Activated naive CD4-positive, alpha-beta T cell treated with anti-CD3 and anti-CD28 coated beads for 36 hours (primary cell): ENCODE measurements at regions of chr20 and their contacts with region 1.

Region 1: DNA sequence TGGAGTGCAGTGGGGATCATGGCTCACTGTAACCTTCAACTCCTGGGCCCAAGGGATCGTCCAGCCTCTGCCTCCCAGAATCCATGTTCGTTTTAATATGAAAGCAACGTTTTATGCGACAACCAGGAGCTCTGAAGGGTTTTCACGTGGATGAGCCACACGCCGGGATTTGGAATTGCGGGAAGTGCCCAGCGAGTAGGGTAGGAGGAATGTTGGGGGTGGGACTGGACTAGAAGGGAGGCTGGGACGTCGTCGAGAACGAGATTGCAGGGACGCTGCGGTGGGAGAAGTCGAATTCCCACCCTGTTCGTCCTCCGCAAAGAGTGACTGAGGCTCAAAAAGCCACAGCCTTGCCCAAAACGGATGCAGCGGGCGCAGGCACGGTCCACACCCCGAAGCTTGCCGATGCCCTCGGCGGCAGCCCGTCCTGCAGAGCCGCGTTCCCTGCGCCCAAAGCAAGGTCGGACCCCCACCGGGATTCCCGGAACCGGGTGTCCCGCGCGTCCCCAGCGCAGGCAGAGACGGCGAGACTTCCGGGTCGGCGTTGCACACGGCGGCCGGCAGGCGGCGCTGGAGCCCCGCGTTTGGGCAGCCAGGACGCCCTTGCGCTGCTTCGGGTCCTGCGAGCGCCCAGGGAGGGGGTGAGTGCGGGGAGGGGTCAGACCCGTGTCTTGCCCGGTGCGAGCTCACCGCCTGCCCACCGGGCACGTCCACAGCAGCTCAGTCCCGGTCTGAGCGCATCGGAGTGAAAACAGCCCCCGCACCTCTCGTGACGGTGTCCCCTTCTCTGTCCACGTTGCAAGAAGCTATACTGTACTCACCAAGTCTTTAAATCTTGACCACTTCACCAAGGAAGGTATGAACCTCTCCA is 87.8 kb downstream of the DHX35 start:
- DNase-seq: peak; percentile 78
- H3K4me3 Mint-ChIP-seq: peak overlapping the region; percentile 76
- H3K27ac Mint-ChIP-seq: peak overlapping the region; percentile 18
- H3K4me1 Mint-ChIP-seq: peaks cover 6% of the 10 kb centered on the region
- H3K27me3 Mint-ChIP-seq: no peaks in the 10 kb centered on the region

Region 2: GRCh38 chr20:38645980-38646858 is 403.7 kb before region 1 on chr20:
- CTCF ChIA-PET with region 1: interaction called, 4 read pairs
- intact Hi-C with region 1: loop called (anchors 1 kb)
- DNase-seq: peak; percentile 91
- H3K4me3 Mint-ChIP-seq: peak overlapping the region; percentile 53
- H3K27ac Mint-ChIP-seq: no peak overlapping the region
- H3K4me1 Mint-ChIP-seq: peaks cover 11% of the 10 kb centered on the region
- H3K27me3 Mint-ChIP-seq: peaks cover 26% of the 10 kb centered on the region

Region 3: GRCh38 chr20:38805502-38805957 is 244.4 kb before region 1 on chr20 and contains the start of gene PPP1R16B:
- CTCF ChIA-PET with region 1: no interaction called
- intact Hi-C with region 1: loop called (anchors 5 kb)
- DNase-seq: peak; percentile 76
- H3K4me3 Mint-ChIP-seq: peak within 1 kb of the TSS; percentile 85
- H3K27ac Mint-ChIP-seq: peak within 1 kb of the TSS; percentile 96
- H3K4me1 Mint-ChIP-seq: peaks cover 47% of the 10 kb centered on the region
- H3K27me3 Mint-ChIP-seq: no peaks in the 10 kb centered on the region
- total RNA-seq, gene PPP1R16B: 38.1 to 40.0 TPM

Region 4: GRCh38 chr20:38997622-38998021 is 52.3 kb before region 1 on chr20:
- CTCF ChIA-PET with region 1: interaction called, 22 read pairs
- intact Hi-C with region 1: no loop called
- DNase-seq: peak; percentile 60
- H3K4me3 Mint-ChIP-seq: no peak overlapping the region
- H3K27ac Mint-ChIP-seq: peak overlapping the region; percentile 43
- H3K4me1 Mint-ChIP-seq: peaks cover 15% of the 10 kb centered on the region
- H3K27me3 Mint-ChIP-seq: no peaks in the 10 kb centered on the region

Region 5: GRCh38 chr20:39075731-39076130 is 25.8 kb after region 1 on chr20:
- CTCF ChIA-PET with region 1: interaction called, 90 read pairs
- intact Hi-C with region 1: no loop called
- DNase-seq: no peak
- H3K4me3 Mint-ChIP-seq: no peak overlapping the region
- H3K27ac Mint-ChIP-seq: no peak overlapping the region
- H3K4me1 Mint-ChIP-seq: no peaks in the 10 kb centered on the region
- H3K27me3 Mint-ChIP-seq: peaks cover 11% of the 10 kb centered on the region

Region 6: DNA sequence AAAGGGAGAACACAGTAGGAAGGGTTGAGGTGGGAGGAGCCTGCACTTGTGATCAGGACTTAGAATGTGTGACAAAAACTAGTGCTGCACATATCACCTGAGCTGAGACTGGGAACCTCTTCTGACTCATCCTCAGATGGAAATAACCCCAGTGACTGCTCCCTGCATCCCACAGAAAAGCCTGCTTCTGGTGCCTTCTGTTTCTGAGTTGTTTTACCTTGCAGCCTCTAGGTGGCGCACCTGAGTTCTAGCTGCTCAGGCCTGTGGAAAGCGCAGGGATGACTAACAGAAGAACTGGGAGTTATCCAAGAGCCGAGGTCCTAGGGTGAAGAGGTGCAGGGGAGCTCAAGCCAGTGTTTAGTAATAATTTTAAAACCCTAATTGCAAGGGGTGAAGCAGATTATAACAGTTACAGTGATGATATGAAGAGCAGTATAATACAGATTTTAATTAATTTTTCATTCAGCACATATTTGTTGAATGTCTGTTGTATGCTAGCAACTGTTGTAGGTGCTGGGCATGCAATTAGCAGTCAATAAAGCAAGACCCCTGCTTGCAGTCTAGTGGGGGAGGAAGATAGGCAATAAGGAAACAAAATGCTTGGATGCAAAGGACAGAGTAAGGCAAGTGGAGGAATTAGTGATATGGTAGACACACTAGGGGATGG is 214.7 kb after region 1 on chr20:
- CTCF ChIA-PET with region 1: interaction called, 13 read pairs
- intact Hi-C with region 1: no loop called
- DNase-seq: peak; percentile 65
- H3K4me3 Mint-ChIP-seq: no peak overlapping the region
- H3K27ac Mint-ChIP-seq: no peak overlapping the region
- H3K4me1 Mint-ChIP-seq: no peaks in the 10 kb centered on the region
- H3K27me3 Mint-ChIP-seq: peaks cover 2% of the 10 kb centered on the region